CD4-positive, alpha-beta T cell (primary cell): ENCODE measurements at regions of chr5 and their contacts with region 1.

Region 1: GRCh38 chr5:103119765-103120606 is at the starts of genes GIN1 and PPIP5K2:
- DNase-seq: peak; percentile 93 to 99 (median 97)
- ATAC-seq: peak; percentile 90
- H3K4me3 ChIP-seq: peak within 1 kb of the TSS; percentile 86
- H3K4me3 Mint-ChIP-seq: peak within 1 kb of the TSS; percentile 98
- H3K27ac ChIP-seq: peak within 1 kb of the TSS; percentile 92 to 98
- H3K27ac Mint-ChIP-seq: peak within 1 kb of the TSS; percentile 97
- H3K4me1 ChIP-seq: peaks cover 13% of the 10 kb centered on the region
- H3K4me1 Mint-ChIP-seq: peaks cover 65% of the 10 kb centered on the region
- H3K27me3 ChIP-seq: no peaks in the 10 kb centered on the region
- H3K27me3 Mint-ChIP-seq: no peaks in the 10 kb centered on the region
- CTCF ChIP-seq: no peak
- total RNA-seq, gene GIN1: 2.7 to 2.9 TPM
- total RNA-seq, gene PPIP5K2: 40.4 to 45.6 TPM

Region 2: DNA sequence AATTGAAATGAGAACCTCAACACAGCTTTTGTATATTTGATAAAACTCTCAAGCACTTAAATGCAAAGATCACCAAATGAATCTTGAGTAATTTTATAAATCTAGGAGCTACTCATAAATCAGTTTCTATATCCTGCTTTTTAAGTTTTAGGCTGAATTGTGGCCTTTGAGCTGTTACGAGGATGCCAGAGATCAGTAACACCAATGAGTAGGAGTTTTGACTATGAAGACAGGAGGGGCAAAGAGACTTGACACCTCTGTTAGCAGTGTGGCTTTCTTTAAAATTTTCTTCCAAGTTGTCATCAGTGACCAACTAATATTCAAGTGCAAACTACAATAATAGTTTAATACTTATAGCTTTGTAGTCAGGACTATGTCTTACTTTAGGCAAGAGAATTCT is 12.7 kb after region 1 on chr5:
- CTCF ChIA-PET with region 1: interaction called, 3 read pairs
- POLR2A ChIA-PET with region 1: interaction called, 12 read pairs
- intact Hi-C with region 1: no loop called
- DNase-seq: no peak
- ATAC-seq: no peak
- H3K4me3 ChIP-seq: no peak overlapping the region
- H3K4me3 Mint-ChIP-seq: no peak overlapping the region
- H3K27ac ChIP-seq: no peak overlapping the region
- H3K27ac Mint-ChIP-seq: peak overlapping the region; percentile 55
- H3K4me1 ChIP-seq: no peaks in the 10 kb centered on the region
- H3K4me1 Mint-ChIP-seq: peaks cover 57% of the 10 kb centered on the region
- H3K27me3 ChIP-seq: no peaks in the 10 kb centered on the region
- H3K27me3 Mint-ChIP-seq: no peaks in the 10 kb centered on the region
- CTCF ChIP-seq: no peak